ENCODE measurements at regions of chr14 and their contacts with region 1.

Region 1: DNA sequence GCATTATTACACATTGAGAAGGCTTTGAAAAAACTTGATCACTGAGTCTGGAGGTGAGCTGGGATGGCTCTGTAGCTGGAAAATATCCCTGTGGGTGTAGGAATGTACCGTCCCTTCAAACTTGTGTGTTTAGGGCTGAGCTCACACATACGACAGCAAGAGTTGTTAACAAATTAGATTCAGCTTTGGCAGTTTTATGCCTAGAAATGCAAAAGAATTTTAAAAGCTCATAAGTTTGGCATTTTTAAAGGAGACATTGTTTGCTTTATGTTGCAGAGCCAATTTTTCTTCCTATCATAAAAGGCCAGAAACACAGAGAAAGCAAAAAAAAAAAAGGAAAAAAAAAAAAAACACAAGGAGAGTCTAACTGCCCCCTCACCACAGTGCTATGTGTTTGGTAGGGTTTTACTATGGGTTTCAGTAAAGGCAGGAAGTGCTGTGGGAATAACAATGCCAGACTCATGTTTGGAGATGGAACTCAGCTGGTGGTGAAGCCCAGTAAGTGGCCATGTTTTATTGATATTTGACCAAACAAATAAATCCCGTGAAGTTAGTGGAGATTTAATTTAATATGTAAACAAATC is 78.4 kb downstream of the DAD1 start:
- DNase-seq: peak; percentile 59
- H3K4me3 ChIP-seq: no peak overlapping the region
- H3K27ac ChIP-seq: no peak overlapping the region
- H3K27me3 ChIP-seq: no peaks in the 10 kb centered on the region
- CTCF ChIP-seq: no peak

Region 2: DNA sequence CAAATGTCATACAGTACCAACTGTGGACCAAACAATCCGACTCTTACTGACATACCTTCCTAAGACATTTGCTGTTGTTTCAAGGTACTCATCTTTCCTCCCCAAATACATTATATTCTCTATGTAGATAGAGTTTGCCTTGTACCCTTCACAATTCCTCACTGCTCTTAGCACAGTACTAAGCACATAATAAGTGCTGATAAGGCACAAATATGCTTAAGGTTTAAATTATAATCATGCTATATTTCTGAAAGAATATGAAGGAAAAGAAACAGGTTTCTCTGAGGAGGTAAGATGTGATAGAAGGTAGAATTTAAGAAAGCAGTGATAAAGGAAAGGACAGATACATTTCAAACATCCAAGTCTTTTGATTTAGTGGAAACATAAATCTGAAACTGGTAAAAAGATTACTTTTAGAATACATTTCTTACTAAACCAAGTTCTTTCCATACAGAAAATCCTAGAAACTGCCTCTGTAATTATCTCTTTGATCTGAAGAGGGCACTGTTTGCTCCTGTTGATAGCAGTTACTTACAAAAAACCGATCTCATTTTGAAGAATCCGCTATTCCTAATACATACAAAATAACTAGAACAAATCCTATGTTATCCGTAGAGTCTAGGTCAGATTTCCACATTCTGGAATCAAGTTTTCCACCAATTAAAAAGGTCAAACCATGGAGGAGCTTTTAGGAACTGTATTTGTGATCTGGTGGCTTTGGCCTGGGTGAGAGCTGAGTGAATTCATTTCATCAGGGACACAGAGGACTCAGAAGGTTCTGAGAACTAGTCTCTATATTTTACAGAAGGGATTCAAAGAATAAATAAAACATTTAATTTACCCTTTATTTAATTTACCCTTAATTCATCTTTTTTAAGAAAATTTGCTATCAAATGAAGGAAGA is 233.5 kb before region 1 on chr14:
- CTCF ChIA-PET with region 1: no interaction called
- POLR2A ChIA-PET with region 1: no interaction called
- DNase-seq: no peak
- H3K4me3 ChIP-seq: no peak overlapping the region
- H3K27ac ChIP-seq: no peak overlapping the region
- H3K27me3 ChIP-seq: peaks cover 5% of the 10 kb centered on the region
- CTCF ChIP-seq: peak; percentile 71

Region 3: GRCh38 chr14:22386924-22387775 is 123.5 kb before region 1 on chr14:
- CTCF ChIA-PET with region 1: no interaction called
- POLR2A ChIA-PET with region 1: interaction called, 12 read pairs
- DNase-seq: peak; percentile 47
- H3K4me3 ChIP-seq: no peak overlapping the region
- H3K27ac ChIP-seq: no peak overlapping the region
- H3K27me3 ChIP-seq: peaks cover 5% of the 10 kb centered on the region
- CTCF ChIP-seq: peak; percentile 74

Region 4: GRCh38 chr14:22422238-22422637 is 88.4 kb before region 1 on chr14:
- CTCF ChIA-PET with region 1: no interaction called
- POLR2A ChIA-PET with region 1: interaction called, 13 read pairs
- DNase-seq: no peak
- H3K4me3 ChIP-seq: no peak overlapping the region
- H3K27ac ChIP-seq: no peak overlapping the region
- H3K27me3 ChIP-seq: peaks cover 52% of the 10 kb centered on the region
- CTCF ChIP-seq: no peak

Region 5: GRCh38 chr14:22483863-22484593 is 26.6 kb before region 1 on chr14:
- CTCF ChIA-PET with region 1: no interaction called
- POLR2A ChIA-PET with region 1: no interaction called
- DNase-seq: no peak
- H3K4me3 ChIP-seq: no peak overlapping the region
- H3K27ac ChIP-seq: no peak overlapping the region
- H3K27me3 ChIP-seq: peaks cover 66% of the 10 kb centered on the region
- CTCF ChIP-seq: no peak

Region 6: GRCh38 chr14:22549981-22550673 is 39.5 kb after region 1 on chr14:
- CTCF ChIA-PET with region 1: no interaction called
- POLR2A ChIA-PET with region 1: interaction called, 10 read pairs
- DNase-seq: peak; percentile 16
- H3K4me3 ChIP-seq: no peak overlapping the region
- H3K27ac ChIP-seq: no peak overlapping the region
- H3K27me3 ChIP-seq: no peaks in the 10 kb centered on the region
- CTCF ChIP-seq: no peak

Region 7: GRCh38 chr14:23006544-23007419 is 496.2 kb after region 1 on chr14:
- CTCF ChIA-PET with region 1: no interaction called
- POLR2A ChIA-PET with region 1: interaction called, 13 read pairs
- DNase-seq: peak; percentile 95
- H3K4me3 ChIP-seq: peak overlapping the region; percentile 80
- H3K27ac ChIP-seq: peak overlapping the region; percentile 92
- H3K27me3 ChIP-seq: no peaks in the 10 kb centered on the region
- CTCF ChIP-seq: peak; percentile 40

Measured in AG04450 (cell line).